Cardiac septum (tissue), 1 donor: ENCODE measurements at regions of chr6 and their contacts with region 1.

Region 1: DNA sequence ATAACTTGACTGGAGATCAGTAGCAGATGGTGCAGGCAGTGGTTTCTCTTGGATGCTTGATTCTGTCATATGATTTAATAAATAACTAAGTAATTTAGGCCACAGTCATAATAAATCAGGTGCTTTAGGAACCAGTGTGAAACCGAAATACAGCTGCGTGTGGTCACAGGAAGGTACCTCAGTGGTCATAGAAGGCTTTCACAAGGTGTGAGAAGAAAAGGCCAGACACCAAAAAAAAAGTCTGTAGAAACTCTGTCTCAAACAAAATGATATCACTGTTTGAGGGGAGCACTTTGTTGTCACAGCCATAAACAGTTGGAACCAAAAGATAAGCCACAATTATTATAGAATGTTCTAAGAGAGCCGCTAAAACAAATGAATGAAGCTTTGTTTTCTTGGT is 56.5 kb downstream of the ARMC2 start:
- DNase-seq: no peak

Region 2: GRCh38 chr6:109059571-109060021 is 154.9 kb after region 1 on chr6:
- intact Hi-C with region 1: loop called (anchors 5 kb)
- DNase-seq: no peak